Ovary (tissue), 10 donors: ENCODE measurements at regions of chr9 and their contacts with region 1.

Region 1: GRCh38 chr9:87342743-87343142 is 154.9 kb upstream of the DAPK1 start:
- DNase-seq: peak; percentile 74 to 85 (median 80)
- H3K4me3 ChIP-seq: no peak overlapping the region
- H3K27ac ChIP-seq: peak overlapping the region; percentile 33 to 64
- H3K4me1 ChIP-seq: peaks cover 5% of the 10 kb centered on the region
- H3K27me3 ChIP-seq: no peaks in the 10 kb centered on the region
- CTCF ChIP-seq: no peak
- EP300 ChIP-seq: no peak
- POLR2A ChIP-seq: no peak

Region 2: DNA sequence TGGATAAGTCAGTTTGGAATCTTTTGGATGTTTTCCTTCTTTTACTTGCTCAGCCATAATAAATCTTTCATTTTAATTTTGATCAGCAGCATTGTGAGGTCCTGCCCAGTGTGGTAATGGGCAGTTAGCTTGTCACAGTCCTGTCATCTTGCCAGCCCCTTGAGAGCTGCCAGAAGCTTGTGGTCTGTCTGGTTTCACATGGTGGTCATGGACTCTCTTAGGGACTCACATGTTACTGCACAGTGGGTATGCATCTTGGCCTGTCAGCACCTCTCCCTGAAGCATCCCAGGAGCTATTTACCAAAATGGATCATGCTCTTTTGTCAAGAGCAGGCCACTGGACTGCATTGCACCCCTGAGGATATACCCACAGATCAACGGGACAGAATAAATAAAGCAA is 215.3 kb after region 1 on chr9:
- intact Hi-C with region 1: no loop called
- DNase-seq: no peak
- H3K4me3 ChIP-seq: no peak overlapping the region
- H3K27ac ChIP-seq: no peak overlapping the region
- H3K4me1 ChIP-seq: peaks cover 6% of the 10 kb centered on the region
- H3K27me3 ChIP-seq: no peaks in the 10 kb centered on the region
- CTCF ChIP-seq: no peak
- EP300 ChIP-seq: no peak
- POLR2A ChIP-seq: no peak

Region 3: DNA sequence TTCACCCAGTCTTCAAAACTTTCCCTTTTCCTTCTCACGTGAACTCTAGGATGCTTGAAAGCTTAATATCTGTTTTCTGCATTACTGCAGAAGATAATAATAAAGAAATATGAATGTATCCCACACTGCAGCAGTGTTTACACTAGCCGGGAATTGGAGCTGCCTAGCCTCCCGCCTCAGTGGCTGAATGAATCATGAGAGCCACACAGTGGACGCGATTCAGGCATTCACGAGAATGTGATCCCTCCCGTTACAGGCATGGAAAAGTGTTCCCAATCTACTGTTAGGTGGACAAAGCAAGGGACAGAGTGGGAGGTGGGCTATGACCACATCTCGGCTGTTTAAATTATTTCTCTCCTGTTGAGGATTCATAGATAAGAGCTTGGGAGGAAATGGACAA is 313.7 kb after region 1 on chr9:
- intact Hi-C with region 1: loop called (anchors 5 kb)
- DNase-seq: peak in 2 of 5 donors; percentile 57 to 63
- H3K4me3 ChIP-seq: no peak overlapping the region
- H3K27ac ChIP-seq: no peak overlapping the region
- H3K4me1 ChIP-seq: peaks cover 5% of the 10 kb centered on the region
- H3K27me3 ChIP-seq: no peaks in the 10 kb centered on the region
- CTCF ChIP-seq: peak in 1 of 3 donors; percentile 6
- EP300 ChIP-seq: no peak
- POLR2A ChIP-seq: no peak